WTC11 (cell line): ENCODE measurements at regions of chr10 and their contacts with region 1.

Region 1: GRCh38 chr10:43689955-43690771 is 41.5 kb upstream of the ZNF32 start:
- DNase-seq: peak; percentile 87
- ATAC-seq: peak; percentile 92
- H3K4me3 Mint-ChIP-seq: peak overlapping the region; percentile 80
- H3K27ac Mint-ChIP-seq: no peak overlapping the region
- H3K4me1 Mint-ChIP-seq: 0 out of 2 replicates have a peak, but pooled peaks cover 5% of the 10 kb centered on the region
- H3K27me3 Mint-ChIP-seq: peaks cover 66% of the 10 kb centered on the region
- CTCF ChIP-seq: peak; percentile 90

Region 2: DNA sequence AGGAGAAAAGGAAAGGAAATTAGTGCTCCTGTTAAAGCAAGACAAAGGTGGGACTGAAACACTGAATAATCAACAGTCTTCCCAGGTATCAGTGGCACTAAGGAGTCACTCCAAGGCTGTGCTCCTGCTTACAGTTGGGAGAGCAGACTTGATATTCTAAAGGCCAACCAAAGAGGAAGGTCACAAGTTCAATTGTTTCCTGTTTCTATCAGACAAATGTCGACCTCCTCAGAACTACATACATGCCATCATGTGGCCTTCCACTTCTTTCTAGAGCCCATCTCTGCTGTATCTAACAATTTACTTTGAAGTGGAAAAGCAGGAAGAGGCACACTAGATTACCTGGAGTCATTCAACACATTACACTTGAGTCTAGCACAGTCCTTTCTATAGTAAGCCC is 119.2 kb before region 1 on chr10:
- CTCF ChIA-PET with region 1: no interaction called
- POLR2A ChIA-PET with region 1: no interaction called
- DNase-seq: no peak
- ATAC-seq: no peak
- H3K4me3 Mint-ChIP-seq: no peak overlapping the region
- H3K27ac Mint-ChIP-seq: no peak overlapping the region
- H3K4me1 Mint-ChIP-seq: peaks cover 26% of the 10 kb centered on the region
- H3K27me3 Mint-ChIP-seq: peaks cover 26% of the 10 kb centered on the region
- CTCF ChIP-seq: no peak

Region 3: DNA sequence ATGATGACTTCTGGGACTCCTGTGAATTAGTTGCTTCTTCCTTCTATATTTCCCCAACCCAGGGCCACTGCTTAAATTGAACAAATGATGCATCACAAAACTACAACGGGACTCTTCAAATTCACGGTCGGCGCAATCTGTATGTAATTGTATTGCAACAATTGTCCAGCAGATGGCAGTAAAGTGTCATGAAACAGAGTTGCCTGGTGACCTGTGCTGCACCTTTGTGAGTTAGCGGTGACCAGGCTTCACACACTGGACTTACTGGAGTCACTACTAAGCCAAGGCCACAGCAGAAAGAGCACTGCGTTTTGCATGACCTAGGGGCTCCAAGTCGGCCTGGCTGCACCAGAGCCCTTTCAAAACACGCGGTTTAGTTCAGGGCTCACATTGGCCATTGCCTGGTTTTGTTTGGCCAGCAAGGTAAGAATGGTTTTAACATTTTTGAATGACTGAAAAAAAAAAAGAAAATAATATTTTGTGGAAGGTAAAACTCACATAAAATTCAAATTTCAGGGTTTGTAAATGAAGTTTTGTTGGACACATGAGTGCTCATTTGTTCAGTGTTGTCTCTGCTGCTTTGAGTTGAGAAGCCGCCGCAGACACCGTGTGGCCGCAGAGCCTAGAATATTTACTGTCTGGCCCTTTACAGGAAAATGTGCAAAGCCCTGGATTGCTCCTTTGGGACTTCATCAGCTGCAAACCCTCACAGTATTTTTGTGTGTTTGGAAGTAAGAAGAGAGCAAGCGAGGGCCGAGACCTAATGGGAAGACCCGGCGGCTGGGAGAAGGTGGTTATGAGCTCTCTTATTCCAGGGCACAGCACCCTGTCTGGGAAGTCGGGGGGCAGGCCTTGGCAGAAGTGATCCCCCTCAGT is 18.3 kb before region 1 on chr10:
- CTCF ChIA-PET with region 1: interaction called, 21 read pairs
- POLR2A ChIA-PET with region 1: no interaction called
- DNase-seq: peak; percentile 60
- ATAC-seq: peak; percentile 85
- H3K4me3 Mint-ChIP-seq: no peak overlapping the region
- H3K27ac Mint-ChIP-seq: no peak overlapping the region
- H3K4me1 Mint-ChIP-seq: peaks cover 13% of the 10 kb centered on the region
- H3K27me3 Mint-ChIP-seq: peaks cover 23% of the 10 kb centered on the region
- CTCF ChIP-seq: peak; percentile 73

Region 4: GRCh38 chr10:43710772-43711471 is 20.8 kb after region 1 on chr10:
- CTCF ChIA-PET with region 1: no interaction called
- POLR2A ChIA-PET with region 1: no interaction called
- DNase-seq: no peak
- ATAC-seq: no peak
- H3K4me3 Mint-ChIP-seq: no peak overlapping the region
- H3K27ac Mint-ChIP-seq: no peak overlapping the region
- H3K4me1 Mint-ChIP-seq: no peaks in the 10 kb centered on the region
- H3K27me3 Mint-ChIP-seq: 0 out of 2 replicates have a peak, but pooled peaks cover 2% of the 10 kb centered on the region
- CTCF ChIP-seq: no peak

Region 5: DNA sequence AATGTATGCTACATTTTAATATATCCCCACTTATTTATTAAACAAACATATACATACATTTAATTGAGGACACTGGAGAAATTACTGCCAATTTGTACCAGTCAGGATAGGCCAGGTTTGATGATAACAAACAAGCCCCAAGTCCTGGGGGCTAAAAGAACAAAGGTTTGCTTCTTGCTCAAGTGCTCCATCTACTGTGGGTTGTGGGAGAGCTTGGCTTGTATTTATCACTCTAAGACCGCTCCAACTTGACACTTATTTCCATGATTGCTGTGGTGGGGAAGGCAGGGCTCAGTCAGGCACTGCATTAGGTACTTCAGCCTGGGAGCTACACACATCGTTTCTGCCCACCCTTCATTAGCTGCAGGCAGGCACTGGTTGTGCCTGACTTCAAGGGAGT is 95.1 kb after region 1 on chr10:
- CTCF ChIA-PET with region 1: interaction called, 14 read pairs
- POLR2A ChIA-PET with region 1: no interaction called
- DNase-seq: no peak
- ATAC-seq: peak; percentile 85
- H3K4me3 Mint-ChIP-seq: no peak overlapping the region
- H3K27ac Mint-ChIP-seq: no peak overlapping the region
- H3K4me1 Mint-ChIP-seq: no peaks in the 10 kb centered on the region
- H3K27me3 Mint-ChIP-seq: no peaks in the 10 kb centered on the region
- CTCF ChIP-seq: no peak

Region 6: DNA sequence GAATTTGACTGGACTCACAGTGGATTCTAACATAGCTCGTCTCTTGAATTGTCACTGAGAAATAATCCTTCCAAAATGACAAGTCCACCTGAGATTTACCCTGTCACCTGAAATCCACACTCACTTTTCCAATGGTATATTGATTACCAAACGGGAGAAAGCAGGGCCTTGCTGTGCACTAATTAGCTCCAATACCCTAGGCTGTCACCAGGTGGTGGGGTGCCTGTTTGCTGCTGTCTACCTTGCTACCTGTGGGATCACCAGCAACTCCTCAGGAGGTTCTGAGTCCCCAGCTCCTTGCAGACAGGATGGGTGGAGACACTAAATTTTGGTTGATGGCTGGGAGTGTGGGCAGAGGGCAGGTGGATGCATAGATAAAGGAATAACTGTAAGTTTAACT is 195.7 kb after region 1 on chr10:
- CTCF ChIA-PET with region 1: interaction called, 12 read pairs
- POLR2A ChIA-PET with region 1: no interaction called
- DNase-seq: peak; percentile 48
- ATAC-seq: peak; percentile 90
- H3K4me3 Mint-ChIP-seq: no peak overlapping the region
- H3K27ac Mint-ChIP-seq: no peak overlapping the region
- H3K4me1 Mint-ChIP-seq: peaks cover 18% of the 10 kb centered on the region
- H3K27me3 Mint-ChIP-seq: no peaks in the 10 kb centered on the region
- CTCF ChIP-seq: peak; percentile 30; the same call in 1 of the 2 replicates

Region 7: GRCh38 chr10:44030143-44030542 is 340.0 kb after region 1 on chr10:
- CTCF ChIA-PET with region 1: interaction called, 14 read pairs
- POLR2A ChIA-PET with region 1: no interaction called
- DNase-seq: peak; percentile 43
- ATAC-seq: peak; percentile 89
- H3K4me3 Mint-ChIP-seq: no peak overlapping the region
- H3K27ac Mint-ChIP-seq: no peak overlapping the region
- H3K4me1 Mint-ChIP-seq: peaks cover 7% of the 10 kb centered on the region
- H3K27me3 Mint-ChIP-seq: no peaks in the 10 kb centered on the region; the same call in 1 of the 2 replicates
- CTCF ChIP-seq: no peak